BJ (cell line): ENCODE measurements at regions of chr18 and their contacts with region 1.

Region 1: DNA sequence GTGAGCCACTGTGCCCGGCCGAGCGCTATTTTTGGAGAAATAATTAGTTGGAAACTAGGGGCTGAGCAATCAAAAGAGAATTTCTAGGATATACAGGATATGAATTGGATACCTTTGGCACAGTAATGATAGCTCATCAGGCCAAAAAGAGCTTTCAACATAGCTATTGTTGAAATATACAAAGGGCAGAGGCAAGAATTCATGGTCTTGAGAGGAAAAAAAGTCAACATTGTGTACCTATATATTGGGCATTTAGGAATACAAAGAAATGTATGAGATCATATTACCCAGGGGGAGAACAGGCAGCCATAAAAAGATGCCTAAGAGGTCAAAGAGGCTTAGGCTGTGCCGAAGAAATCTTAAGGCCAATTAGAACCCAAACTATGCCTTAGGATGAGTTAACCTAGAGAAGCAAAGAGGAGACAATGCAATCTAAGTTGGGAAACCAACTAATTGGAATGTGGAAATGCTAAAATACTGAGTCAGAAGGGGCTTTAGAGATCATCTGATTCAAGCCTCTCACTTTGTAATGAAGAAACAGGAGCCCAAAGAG is 99.0 kb downstream of the RBBP8 start:
- DNase-seq: peak; percentile 53
- H3K4me3 ChIP-seq: no peak overlapping the region
- H3K27me3 ChIP-seq: no peaks in the 10 kb centered on the region
- CTCF ChIP-seq: no peak

Region 2: DNA sequence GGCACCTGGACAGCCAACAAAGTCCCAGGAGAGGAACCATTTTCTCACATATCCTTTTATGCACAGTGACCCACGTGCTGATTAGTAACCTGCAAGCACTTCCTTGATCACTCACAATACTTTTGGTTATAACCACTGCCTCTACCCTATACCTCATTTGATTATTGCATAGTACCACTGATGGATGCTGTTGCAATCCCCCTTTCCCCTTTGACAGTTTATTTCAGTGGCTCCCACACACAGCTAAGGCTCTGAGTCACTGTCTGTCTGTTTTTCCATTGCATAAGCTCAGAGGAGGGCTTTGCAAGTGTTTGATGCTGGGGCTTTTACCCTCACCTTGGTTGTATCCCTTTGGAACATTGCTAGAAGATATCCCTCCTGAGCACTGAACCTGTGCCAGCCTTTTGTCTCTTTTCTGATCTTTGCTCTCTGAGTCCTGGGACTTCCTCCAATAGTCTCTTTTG is 200.6 kb before region 1 on chr18:
- CTCF ChIA-PET with region 1: no interaction called
- POLR2A ChIA-PET with region 1: no interaction called
- DNase-seq: no peak
- H3K4me3 ChIP-seq: no peak overlapping the region
- H3K27me3 ChIP-seq: no peaks in the 10 kb centered on the region
- CTCF ChIP-seq: no peak

Region 3: DNA sequence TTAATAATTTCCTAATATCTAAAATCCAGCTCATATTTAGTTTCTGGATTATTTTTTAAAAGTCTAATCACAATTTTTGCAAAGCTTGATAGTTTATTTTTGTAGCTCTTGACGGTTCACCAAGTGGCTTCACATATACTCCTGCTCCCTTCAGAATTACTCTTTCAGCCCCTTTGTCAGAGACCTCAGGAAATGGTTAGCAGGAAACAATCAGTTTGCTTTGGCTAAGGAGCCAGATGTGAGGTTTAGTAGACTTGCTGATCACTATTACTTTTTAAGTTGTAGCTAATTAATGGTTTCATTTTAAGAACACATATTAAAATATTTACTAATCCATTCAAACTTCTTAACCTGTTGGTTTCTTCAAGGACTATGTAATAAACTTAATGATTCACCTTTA is 96.7 kb before region 1 on chr18:
- CTCF ChIA-PET with region 1: no interaction called
- POLR2A ChIA-PET with region 1: no interaction called
- DNase-seq: no peak
- H3K4me3 ChIP-seq: no peak overlapping the region
- H3K27me3 ChIP-seq: no peaks in the 10 kb centered on the region
- CTCF ChIP-seq: no peak

Region 4: GRCh38 chr18:23056315-23056714 is 24.2 kb after region 1 on chr18:
- CTCF ChIA-PET with region 1: no interaction called
- POLR2A ChIA-PET with region 1: no interaction called
- DNase-seq: no peak
- H3K4me3 ChIP-seq: no peak overlapping the region
- H3K27me3 ChIP-seq: no peaks in the 10 kb centered on the region
- CTCF ChIP-seq: no peak

Region 5: GRCh38 chr18:23356915-23357601 is 325.0 kb after region 1 on chr18:
- CTCF ChIA-PET with region 1: interaction called, 20 read pairs
- POLR2A ChIA-PET with region 1: no interaction called
- DNase-seq: peak; percentile 73
- H3K4me3 ChIP-seq: no peak overlapping the region
- H3K27me3 ChIP-seq: no peaks in the 10 kb centered on the region
- CTCF ChIP-seq: no peak

Region 6: DNA sequence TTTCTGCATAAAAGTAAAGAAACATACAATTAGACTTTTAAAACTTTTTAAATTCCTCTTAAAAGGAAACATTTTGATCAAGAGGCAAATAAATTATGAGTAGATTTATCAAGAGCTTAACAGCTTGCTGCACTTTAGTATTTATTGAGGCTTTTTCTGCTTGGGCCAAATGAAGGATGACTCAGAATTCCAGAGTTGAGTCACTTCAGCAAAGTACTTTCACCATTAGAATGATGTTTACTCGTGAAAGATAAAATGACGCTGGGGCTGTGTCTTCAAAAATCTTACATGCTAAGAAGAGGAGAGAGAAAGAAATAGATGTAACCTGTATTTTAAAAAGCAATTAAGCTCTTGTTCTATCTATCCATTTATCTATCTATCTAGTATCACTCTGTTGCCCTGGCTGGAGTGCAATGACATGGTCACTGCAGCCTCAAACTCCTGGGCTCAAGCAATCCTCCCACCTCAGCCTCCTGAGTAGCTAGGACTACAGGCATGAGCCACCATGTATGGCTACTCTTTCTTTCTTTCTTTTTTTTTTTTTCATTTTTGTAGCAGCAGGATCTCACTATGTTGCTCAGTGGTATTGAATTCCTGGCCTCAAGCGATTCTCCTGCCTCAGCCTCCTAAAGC is 345.7 kb after region 1 on chr18:
- CTCF ChIA-PET with region 1: interaction called, 35 read pairs
- POLR2A ChIA-PET with region 1: no interaction called
- DNase-seq: peak; percentile 69
- H3K4me3 ChIP-seq: no peak overlapping the region
- H3K27me3 ChIP-seq: no peaks in the 10 kb centered on the region
- CTCF ChIP-seq: no peak

Region 7: DNA sequence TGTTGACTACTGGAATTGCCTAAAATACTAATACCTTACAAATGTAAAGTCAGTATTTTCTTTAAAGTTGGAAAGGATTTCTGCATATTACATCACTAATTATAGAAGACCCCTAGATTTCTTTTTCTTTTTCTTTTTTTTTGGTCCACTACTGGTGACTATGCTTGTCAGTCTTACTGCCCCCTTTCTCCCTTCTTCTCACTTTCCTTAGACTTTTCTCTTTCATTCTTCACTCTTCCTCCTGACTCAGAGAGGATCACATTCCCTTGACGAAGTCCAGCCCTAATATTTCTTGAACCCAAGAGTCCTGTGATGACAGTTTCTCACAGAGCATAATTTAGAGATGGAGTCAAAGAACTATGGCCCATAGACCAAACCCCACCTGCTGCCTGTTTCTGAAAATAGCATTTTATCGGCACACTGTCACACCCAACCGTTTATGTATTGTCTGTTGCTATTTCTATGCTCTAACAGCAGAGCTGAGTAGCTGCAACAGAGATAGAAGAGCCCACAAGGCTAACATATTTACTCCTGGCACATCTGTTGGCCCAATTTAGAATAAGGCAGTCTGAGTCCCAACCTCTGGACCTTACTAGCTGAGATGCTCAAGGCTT is 380.4 kb after region 1 on chr18:
- CTCF ChIA-PET with region 1: interaction called, 22 read pairs
- POLR2A ChIA-PET with region 1: no interaction called
- DNase-seq: no peak
- H3K4me3 ChIP-seq: no peak overlapping the region
- H3K27me3 ChIP-seq: no peaks in the 10 kb centered on the region
- CTCF ChIP-seq: no peak